Heart right ventricle (tissue), 16 donors: ENCODE measurements at regions of chr19 and their contacts with region 1.

Region 1: DNA sequence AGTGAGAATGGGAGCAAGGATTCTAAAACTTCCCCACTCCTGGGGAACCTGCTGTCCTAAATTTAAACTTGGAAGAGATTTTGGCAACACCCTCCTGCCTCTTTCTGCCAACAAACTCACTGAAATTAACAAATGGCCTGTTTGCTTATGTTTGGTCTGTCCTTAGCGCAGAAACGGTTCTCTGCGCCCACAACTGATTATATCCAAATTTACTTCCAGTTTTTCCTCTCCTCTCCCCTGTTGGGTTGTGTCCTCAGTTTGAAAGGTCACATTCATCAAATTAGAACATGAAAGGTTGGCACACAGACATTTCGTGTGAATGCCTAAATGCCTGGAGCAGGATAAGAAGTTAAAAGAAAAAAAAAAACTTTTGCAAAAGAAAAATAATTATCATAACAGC is 56.4 kb upstream of the MRI1 start:
- DNase-seq: no peak
- ATAC-seq: peak in 2 of 8 donors; percentile 33 to 34
- H3K4me3 ChIP-seq: no peak overlapping the region
- H3K27ac ChIP-seq: peak overlapping the region in 8 of 10 donors; percentile 22 to 61 (median 35)
- H3K4me1 ChIP-seq: peaks cover 0 to 16% (median 4%) of the 10 kb centered on the region in 9 donors
- H3K27me3 ChIP-seq: peaks cover 0 to 9% (median 0%) of the 10 kb centered on the region in 7 donors
- CTCF ChIP-seq: no peak

Region 2: DNA sequence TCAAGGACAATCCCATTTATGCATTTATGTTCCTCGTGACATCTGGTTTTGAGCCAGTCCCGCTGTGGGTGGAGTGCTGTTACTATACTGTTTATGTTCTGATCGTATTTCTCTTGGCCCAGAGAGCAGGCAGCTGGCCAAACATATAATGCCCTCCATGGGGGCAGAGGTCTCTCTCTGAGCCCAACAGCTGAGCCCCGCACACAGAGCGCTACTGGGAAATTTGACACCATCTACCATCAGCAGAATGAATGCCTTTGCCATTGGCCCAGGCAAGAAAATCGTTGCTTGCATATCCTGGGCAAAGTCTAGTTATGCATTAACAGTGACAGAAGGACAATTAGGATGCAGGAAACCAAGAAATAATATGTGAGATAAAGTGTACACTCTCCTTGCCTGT is 74.8 kb before region 1 on chr19:
- intact Hi-C with region 1: no loop called
- DNase-seq: no peak
- ATAC-seq: no peak
- H3K4me3 ChIP-seq: no peak overlapping the region
- H3K27ac ChIP-seq: no peak overlapping the region
- H3K4me1 ChIP-seq: no peaks in the 10 kb centered on the region
- H3K27me3 ChIP-seq: peaks cover 0 to 29% (median 14%) of the 10 kb centered on the region in 7 donors
- CTCF ChIP-seq: no peak

Region 3: DNA sequence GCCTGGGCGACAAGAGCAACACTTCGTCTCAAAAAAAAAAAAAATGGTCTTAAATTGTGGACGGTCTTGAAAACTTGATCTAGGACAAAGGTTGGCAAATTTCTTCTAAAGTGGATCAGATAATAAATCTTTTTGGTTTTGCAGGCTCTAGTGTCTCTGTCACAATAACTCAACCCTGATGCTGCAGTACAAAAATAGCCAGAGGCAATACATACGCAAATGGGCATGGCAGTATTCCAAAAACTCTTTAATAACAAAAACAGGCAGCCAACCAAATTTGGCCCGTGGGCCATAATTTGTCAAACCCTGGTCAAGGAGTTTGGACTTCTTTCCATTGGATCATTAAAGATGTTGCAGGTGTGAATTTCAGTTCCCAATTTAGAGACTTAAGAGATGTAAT is 37.1 kb before region 1 on chr19:
- intact Hi-C with region 1: loop called in 1 of 10 experiments (anchors 5 kb)
- DNase-seq: no peak
- ATAC-seq: peak in 1 of 8 donors; percentile 49
- H3K4me3 ChIP-seq: no peak overlapping the region
- H3K27ac ChIP-seq: no peak overlapping the region
- H3K4me1 ChIP-seq: peaks cover 0 to 6% (median 0%) of the 10 kb centered on the region in 9 donors
- H3K27me3 ChIP-seq: peaks cover 0 to 3% (median 0%) of the 10 kb centered on the region in 7 donors
- CTCF ChIP-seq: no peak